CD8-positive, alpha-beta memory T cell (primary cell): ENCODE measurements at regions of chr5 and their contacts with region 1.

Region 1: DNA sequence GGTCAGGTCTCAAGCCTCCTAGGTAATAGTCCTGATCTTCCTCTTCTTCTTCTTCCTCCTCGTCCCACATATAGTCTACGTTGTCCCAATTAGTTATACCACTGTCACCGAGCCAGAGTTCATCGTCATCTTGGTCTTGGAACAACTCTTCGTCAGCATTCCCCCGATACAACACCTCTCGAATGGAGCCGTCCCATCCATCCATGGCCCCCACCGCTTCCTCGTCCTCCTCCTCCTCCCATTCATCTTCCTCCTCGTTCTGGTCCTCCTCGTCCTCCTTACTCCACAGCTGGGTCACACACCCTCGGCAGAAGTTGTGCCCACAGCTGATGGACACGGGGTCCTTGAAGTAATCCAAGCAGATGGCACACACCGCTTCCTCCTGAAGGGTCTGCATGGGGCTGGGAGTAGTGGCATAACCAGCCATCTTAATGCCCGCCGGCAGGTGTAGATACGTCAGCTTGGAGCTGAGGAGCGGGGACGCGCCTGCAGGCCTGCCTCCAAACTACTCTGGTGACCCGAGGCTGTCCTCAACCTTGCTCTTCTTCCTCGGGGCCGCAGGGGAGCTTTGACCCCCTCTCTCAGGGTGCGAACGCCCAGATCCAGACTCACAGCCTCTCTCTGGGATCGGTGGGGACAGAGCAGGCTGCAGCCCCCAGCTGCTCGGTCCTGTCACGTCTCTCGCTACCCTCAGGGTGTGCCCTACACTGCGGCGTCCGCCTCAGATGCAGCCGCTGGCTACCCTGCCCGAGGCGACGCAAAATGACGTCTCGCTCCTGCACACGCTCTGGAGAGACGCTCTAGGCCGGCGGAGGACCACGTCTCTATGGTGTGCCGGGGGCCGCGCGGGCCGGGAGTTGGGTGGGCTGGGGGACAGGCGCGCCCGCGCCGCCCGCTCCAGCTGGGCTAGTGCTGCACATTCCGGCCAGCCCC is at the start of gene TRIM52:
- DNase-seq: peak; percentile 83 to 95 (median 91)
- H3K4me3 ChIP-seq: peak within 1 kb of the TSS; percentile 99
- H3K4me3 Mint-ChIP-seq: peak within 1 kb of the TSS; percentile 97 to 99 (median 98)
- H3K27ac ChIP-seq: peak within 1 kb of the TSS; percentile 99
- H3K27ac Mint-ChIP-seq: peak within 1 kb of the TSS; percentile 95 to 99 (median 98)
- H3K4me1 ChIP-seq: peaks cover 51% of the 10 kb centered on the region
- H3K4me1 Mint-ChIP-seq: peaks cover 52 to 59% (median 56%) of the 10 kb centered on the region in 3 donors
- H3K27me3 ChIP-seq: no peaks in the 10 kb centered on the region
- H3K27me3 Mint-ChIP-seq: no peaks in the 10 kb centered on the region
- total RNA-seq, gene TRIM52: 14.1 to 17.1 TPM

Region 2: GRCh38 chr5:181184857-181185251 is 75.8 kb before region 1 on chr5:
- CTCF ChIA-PET with region 1: interaction called, 27 read pairs
- POLR2A ChIA-PET with region 1: interaction called, 118 read pairs
- DNase-seq: no peak
- H3K4me3 ChIP-seq: no peak overlapping the region
- H3K4me3 Mint-ChIP-seq: peak overlapping the region; percentile 85 to 95 (median 91)
- H3K27ac ChIP-seq: peak overlapping the region; percentile 59
- H3K27ac Mint-ChIP-seq: peak overlapping the region in 6 of 8 donors; percentile 15 to 97 (median 90)
- H3K4me1 ChIP-seq: peaks cover 4% of the 10 kb centered on the region
- H3K4me1 Mint-ChIP-seq: peaks cover 43 to 58% (median 54%) of the 10 kb centered on the region in 3 donors
- H3K27me3 ChIP-seq: no peaks in the 10 kb centered on the region
- H3K27me3 Mint-ChIP-seq: peaks cover 0 to 26% of the 10 kb centered on the region in 2 donors

Region 3: GRCh38 chr5:181191529-181192394 is 68.9 kb before region 1 on chr5:
- CTCF ChIA-PET with region 1: interaction called, 27 read pairs
- POLR2A ChIA-PET with region 1: interaction called, 118 read pairs
- DNase-seq: peak; percentile 90 to 97 (median 95)
- H3K4me3 ChIP-seq: peak overlapping the region; percentile 100
- H3K4me3 Mint-ChIP-seq: peak overlapping the region; percentile 94 to 100 (median 97)
- H3K27ac ChIP-seq: peak overlapping the region; percentile 83
- H3K27ac Mint-ChIP-seq: peak overlapping the region; percentile 93 to 100 (median 97)
- H3K4me1 ChIP-seq: peaks cover 6% of the 10 kb centered on the region
- H3K4me1 Mint-ChIP-seq: peaks cover 27 to 47% (median 35%) of the 10 kb centered on the region in 3 donors
- H3K27me3 ChIP-seq: no peaks in the 10 kb centered on the region
- H3K27me3 Mint-ChIP-seq: peaks cover 0 to 36% of the 10 kb centered on the region in 2 donors

Region 4: DNA sequence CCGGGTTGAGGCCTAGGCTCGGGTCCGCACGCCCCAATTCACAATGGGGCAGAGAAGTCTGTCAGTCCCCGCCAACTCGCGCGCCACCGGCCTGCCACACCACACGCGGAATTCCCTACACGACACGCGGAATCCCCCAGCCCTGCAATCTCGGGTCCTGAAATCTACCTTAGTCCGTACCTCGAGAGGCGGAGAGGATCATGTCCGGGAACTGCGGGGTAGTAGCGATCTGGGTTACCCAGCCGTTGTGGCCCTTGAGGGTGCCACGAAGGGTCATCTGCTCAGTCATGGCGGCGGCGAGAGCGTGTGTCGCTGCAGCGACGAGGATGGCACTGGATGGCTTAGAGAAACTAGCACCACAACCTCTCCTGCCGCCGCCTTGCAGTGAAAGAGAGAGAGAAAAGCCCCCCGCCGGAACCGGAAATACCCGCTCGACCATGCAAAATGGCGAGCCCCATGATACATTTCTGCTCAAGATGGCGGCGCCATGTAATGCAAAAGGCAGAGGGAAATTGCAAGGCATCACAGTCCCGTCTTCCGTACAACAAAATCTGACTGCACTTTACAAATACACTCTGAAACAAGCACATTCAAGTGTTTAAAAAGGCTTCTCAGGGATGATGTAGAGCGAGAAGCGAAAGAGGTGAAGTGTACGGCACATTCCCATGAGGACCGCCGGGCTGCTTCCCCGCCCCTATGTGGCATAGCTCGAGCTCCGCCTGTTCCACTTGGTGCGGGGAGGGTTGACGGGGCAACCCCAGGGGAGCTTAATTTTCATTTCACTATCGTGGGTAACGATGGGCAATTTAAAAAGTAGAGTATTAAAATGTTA is 16.9 kb before region 1 on chr5 and contains the start of gene RACK1:
- CTCF ChIA-PET with region 1: interaction called, 22 read pairs
- POLR2A ChIA-PET with region 1: interaction called, 94 read pairs
- DNase-seq: peak; percentile 83 to 93 (median 87)
- H3K4me3 ChIP-seq: peak within 1 kb of the TSS; percentile 95
- H3K4me3 Mint-ChIP-seq: peak within 1 kb of the TSS; percentile 94 to 99 (median 97)
- H3K27ac ChIP-seq: peak within 1 kb of the TSS; percentile 96
- H3K27ac Mint-ChIP-seq: peak within 1 kb of the TSS; percentile 96 to 99 (median 98)
- H3K4me1 ChIP-seq: peaks cover 64% of the 10 kb centered on the region
- H3K4me1 Mint-ChIP-seq: peaks cover 68 to 76% (median 70%) of the 10 kb centered on the region in 3 donors
- H3K27me3 ChIP-seq: no peaks in the 10 kb centered on the region
- H3K27me3 Mint-ChIP-seq: peaks cover 0 to 2% of the 10 kb centered on the region in 2 donors
- total RNA-seq, gene RACK1: 2,341 to 2,398 TPM